ENCODE measurements at regions of chr21 and their contacts with region 1.

Region 1: DNA sequence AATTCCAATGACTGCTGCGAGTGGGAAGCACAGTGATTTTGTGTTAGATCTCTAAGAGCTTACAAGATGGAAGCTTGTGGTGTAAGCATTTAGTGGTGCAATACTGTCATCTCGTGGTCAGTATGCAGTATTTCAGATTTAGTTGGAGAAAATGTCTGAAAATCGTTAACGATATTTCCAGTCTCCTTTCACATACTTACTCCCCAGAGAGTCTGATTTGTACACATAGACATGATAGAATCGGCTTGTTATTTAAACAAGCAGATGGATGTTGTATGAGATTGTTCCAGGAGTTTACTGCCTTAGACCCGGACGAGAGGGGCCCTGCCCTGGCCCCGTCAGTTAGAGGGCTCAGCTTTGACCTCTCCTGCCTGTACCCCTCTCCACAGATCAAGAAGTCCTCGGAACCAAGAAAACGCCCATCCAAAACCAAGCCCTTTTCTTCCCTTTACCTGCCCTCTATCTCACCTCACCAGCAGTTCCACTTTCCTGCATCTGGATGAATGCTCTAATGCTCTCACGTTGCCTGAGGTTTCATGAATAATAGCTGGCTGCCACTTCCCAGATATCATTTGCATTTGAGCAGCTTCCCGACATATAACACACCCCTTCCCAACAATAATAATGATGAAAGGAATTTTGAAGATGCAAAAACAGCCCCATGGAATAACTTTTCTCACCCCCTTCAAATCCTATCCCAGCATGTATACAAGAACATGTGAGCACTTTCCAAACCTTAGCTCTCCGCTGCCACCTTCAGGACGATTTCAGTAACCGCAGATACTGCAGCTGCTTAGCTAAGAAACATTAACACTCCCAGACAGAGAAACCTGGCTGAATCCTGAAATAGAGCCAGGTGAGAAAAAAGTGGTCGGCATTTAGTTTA is 247.3 kb downstream of the LTN1 start:
- DNase-seq: peak; percentile 71 to 77
- H3K4me3 ChIP-seq: peak overlapping the region; percentile 46 to 57
- H3K27ac ChIP-seq: peak overlapping the region; percentile 68 to 74
- H3K4me1 ChIP-seq: peaks cover 0 to 17% (median 4%) of the 10 kb centered on the region in 4 donors
- H3K27me3 ChIP-seq: no peaks in the 10 kb centered on the region
- CTCF ChIP-seq: peak; percentile 92 to 99

Region 2: DNA sequence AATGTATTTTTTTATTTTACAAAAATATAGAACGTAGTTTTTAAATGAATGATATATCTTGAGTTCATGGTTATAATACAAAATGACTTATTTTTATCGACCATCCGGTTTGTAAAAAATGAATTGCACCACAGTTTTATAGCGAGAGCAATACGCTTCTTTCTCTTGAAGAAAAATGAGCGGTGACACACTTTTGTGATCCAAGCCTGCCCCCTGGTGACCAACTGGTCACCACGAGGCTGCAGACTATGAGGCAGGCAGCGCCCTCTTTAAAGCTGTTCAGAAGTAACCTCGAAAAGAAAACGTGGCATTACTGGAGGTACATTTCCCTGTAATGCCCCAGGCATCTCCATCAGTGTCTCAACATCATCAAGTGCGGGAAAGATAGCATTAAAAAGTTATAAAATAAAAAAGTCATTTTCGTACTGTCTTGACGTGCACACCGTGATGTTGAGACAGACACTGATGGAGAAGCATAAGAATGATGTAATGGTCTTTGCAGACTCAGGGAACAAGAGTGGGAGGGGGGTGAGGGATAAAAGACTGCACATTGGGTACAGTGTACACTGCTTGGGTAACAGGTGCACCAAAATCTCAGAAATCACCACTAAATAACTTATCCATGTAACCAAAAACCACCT is 1044.3 kb before region 1 on chr21:
- intact Hi-C with region 1: loop called (anchors 10 kb)
- DNase-seq: peak; percentile 80 to 88
- H3K4me3 ChIP-seq: no peak overlapping the region
- H3K27ac ChIP-seq: no peak overlapping the region
- H3K4me1 ChIP-seq: no peaks in the 10 kb centered on the region
- H3K27me3 ChIP-seq: no peaks in the 10 kb centered on the region
- CTCF ChIP-seq: peak; percentile 82 to 92

Region 3: GRCh38 chr21:28516991-28517592 is 228.3 kb before region 1 on chr21:
- intact Hi-C with region 1: loop called (anchors 10 kb)
- DNase-seq: peak; percentile 28 to 67
- H3K4me3 ChIP-seq: no peak overlapping the region
- H3K27ac ChIP-seq: peak overlapping the region in 1 of 2 donors; percentile 34
- H3K4me1 ChIP-seq: peaks cover 0 to 20% (median 2%) of the 10 kb centered on the region in 4 donors
- H3K27me3 ChIP-seq: no peaks in the 10 kb centered on the region
- CTCF ChIP-seq: peak; percentile 20 to 38

Region 4: DNA sequence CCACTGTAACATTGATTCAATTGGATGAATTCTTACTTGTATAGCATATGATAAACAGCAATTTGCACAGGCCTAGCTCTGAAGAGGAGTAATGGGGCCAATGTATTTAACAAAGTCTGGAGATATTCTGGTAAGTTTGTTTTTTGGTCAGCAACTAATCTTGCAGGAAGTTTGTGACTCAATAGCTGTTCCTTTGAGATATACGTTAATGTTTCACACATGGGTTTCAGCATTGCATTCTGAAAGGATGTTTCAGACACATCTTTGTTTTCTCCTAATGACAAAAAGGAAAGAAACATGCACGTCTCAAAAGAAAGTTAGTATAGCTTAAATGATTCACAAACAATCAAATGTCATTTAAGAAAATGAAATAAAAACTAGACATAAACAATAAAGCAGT is 198.3 kb after region 1 on chr21:
- intact Hi-C with region 1: loop called (anchors 10 kb)
- DNase-seq: no peak
- H3K4me3 ChIP-seq: no peak overlapping the region
- H3K27ac ChIP-seq: no peak overlapping the region
- H3K4me1 ChIP-seq: peaks cover 0 to 23% (median 0%) of the 10 kb centered on the region in 4 donors
- H3K27me3 ChIP-seq: no peaks in the 10 kb centered on the region
- CTCF ChIP-seq: no peak

Measured in tibial artery (tissue), 4 donors.